PC-3 (cell line): ENCODE measurements at regions of chr6 and their contacts with region 1.

Region 1: GRCh38 chr6:9405369-9405768 is 970.0 kb upstream of the SLC35B3 start:
- DNase-seq: peak; percentile 95
- ATAC-seq: peak; percentile 83
- H3K4me3 ChIP-seq: peak overlapping the region; percentile 38
- H3K27ac ChIP-seq: peak overlapping the region; percentile 97
- H3K4me1 ChIP-seq: peaks cover 68% of the 10 kb centered on the region
- H3K27me3 ChIP-seq: no peaks in the 10 kb centered on the region
- CTCF ChIP-seq: no peak

Region 2: DNA sequence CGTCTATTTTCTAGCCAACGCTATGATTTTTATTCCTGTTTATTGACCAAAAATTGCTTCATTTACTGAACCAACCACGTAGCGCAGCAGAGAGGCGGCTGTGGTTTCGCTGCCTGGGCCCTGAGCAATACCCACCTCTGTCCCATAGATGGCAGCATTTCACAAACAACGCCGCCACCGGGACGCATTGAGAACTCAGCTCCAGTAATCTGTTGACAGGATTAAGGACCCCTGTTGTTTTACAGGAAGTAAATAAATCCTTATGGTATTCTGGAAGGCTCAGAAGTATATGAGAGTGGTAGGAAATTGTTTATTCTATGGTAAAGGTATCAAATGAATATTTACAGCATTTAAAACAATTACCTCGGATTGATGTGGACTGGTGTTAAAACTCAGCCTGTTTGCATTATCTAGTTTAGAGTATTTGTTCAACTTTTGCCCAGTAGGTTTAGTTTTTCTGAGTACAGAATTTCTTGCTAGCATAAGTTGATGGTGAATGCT is 422.1 kb before region 1 on chr6:
- CTCF ChIA-PET with region 1: no interaction called
- POLR2A ChIA-PET with region 1: no interaction called
- intact Hi-C with region 1: loop called (anchors 2 kb)
- DNase-seq: peak; percentile 78
- ATAC-seq: peak; percentile 98
- H3K4me3 ChIP-seq: no peak overlapping the region
- H3K27ac ChIP-seq: no peak overlapping the region
- H3K4me1 ChIP-seq: no peaks in the 10 kb centered on the region; the same call in 1 of the 2 replicates
- H3K27me3 ChIP-seq: peaks cover 21% of the 10 kb centered on the region; the same call in 1 of the 2 replicates
- CTCF ChIP-seq: peak; percentile 96

Region 3: GRCh38 chr6:9140172-9140571 is 265.2 kb before region 1 on chr6:
- CTCF ChIA-PET with region 1: no interaction called
- POLR2A ChIA-PET with region 1: no interaction called
- intact Hi-C with region 1: loop called (anchors 10 kb)
- DNase-seq: peak; percentile 82
- ATAC-seq: peak; percentile 72
- H3K4me3 ChIP-seq: peak overlapping the region; percentile 53; the same call in 1 of the 2 replicates
- H3K27ac ChIP-seq: peak overlapping the region; percentile 91
- H3K4me1 ChIP-seq: peaks cover 31% of the 10 kb centered on the region
- H3K27me3 ChIP-seq: no peaks in the 10 kb centered on the region
- CTCF ChIP-seq: no peak

Region 4: GRCh38 chr6:9257211-9257610 is 148.2 kb before region 1 on chr6:
- CTCF ChIA-PET with region 1: no interaction called
- POLR2A ChIA-PET with region 1: no interaction called
- intact Hi-C with region 1: no loop called
- DNase-seq: no peak
- ATAC-seq: no peak
- H3K4me3 ChIP-seq: no peak overlapping the region
- H3K27ac ChIP-seq: no peak overlapping the region
- H3K4me1 ChIP-seq: no peaks in the 10 kb centered on the region
- H3K27me3 ChIP-seq: peaks cover 6% of the 10 kb centered on the region; the same call in 1 of the 2 replicates
- CTCF ChIP-seq: no peak

Region 5: DNA sequence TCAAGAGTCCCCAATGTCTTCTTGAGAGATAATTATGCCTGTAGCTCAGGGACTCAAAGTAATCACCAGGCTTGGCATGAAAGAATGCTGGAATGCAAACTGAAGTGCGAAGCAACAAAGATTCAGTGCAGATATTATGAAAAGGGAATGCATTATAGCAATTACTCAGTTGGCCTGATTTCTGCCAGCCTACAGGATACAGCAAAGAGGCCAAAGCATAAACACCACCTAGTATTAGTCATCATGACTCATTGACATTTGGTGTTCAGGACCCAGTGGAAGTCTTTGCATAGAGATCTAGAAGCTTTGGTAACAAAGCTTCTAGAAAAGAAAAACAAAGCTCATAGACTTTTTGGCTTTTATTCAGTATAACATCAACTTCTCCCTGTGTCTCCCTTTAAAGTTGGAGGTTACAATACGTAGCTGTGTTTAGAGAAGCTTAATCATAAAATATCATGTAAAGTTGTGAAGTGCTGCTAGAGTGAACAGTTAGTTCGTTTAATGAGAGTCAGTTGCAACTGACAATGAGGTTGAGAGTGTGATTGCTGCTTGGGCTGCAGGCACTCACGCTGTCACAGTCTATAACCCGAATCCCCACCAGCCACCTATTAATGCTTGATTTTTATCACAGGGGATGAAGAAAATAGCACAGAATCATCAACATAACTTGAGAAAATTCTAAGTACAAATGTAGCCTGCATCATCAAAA is 76.8 kb after region 1 on chr6:
- CTCF ChIA-PET with region 1: no interaction called
- POLR2A ChIA-PET with region 1: interaction called, 3 read pairs
- intact Hi-C with region 1: loop called (anchors 5 kb)
- DNase-seq: peak; percentile 92
- ATAC-seq: peak; percentile 93
- H3K4me3 ChIP-seq: peak overlapping the region; percentile 27; the same call in 1 of the 2 replicates
- H3K27ac ChIP-seq: peak overlapping the region; percentile 89
- H3K4me1 ChIP-seq: peaks cover 30% of the 10 kb centered on the region
- H3K27me3 ChIP-seq: no peaks in the 10 kb centered on the region
- CTCF ChIP-seq: no peak

Region 6: DNA sequence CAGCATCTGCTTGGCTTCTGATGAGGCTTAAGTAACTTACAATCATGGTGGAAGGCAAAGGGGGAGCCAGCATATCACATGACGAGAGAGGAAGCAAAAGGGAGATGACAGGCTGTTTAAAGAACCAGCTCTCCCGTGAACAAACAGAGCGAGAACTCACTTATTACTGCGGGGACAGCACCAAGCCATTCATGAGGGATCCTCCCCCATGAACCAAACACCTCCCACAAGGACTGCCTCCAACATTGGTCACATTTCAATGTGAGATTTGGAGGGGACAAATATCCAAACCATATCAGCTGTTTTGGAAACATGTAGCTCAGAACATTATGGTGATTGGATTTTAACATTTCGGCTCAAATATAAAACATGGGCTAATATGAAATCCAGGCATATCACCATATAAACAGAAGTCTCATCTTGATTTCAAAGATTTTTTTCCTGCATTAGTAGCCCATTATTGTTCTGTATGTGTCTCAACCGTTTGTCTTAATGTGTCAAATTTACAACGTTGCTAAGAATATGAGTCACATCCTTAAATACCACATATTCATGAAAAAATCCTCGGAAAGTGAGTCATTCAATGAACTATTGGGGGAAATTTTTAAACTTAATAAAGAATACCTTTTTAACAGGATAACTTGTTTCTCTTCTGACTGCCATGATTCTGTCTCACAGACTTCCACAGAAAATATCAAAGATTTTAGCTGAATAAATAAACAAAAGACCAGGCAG is 115.2 kb after region 1 on chr6:
- CTCF ChIA-PET with region 1: no interaction called
- POLR2A ChIA-PET with region 1: no interaction called
- intact Hi-C with region 1: loop called (anchors 5 kb)
- DNase-seq: peak; percentile 84
- ATAC-seq: peak; percentile 70
- H3K4me3 ChIP-seq: no peak overlapping the region
- H3K27ac ChIP-seq: peak overlapping the region; percentile 36
- H3K4me1 ChIP-seq: peaks cover 53% of the 10 kb centered on the region
- H3K27me3 ChIP-seq: no peaks in the 10 kb centered on the region
- CTCF ChIP-seq: no peak

Region 7: DNA sequence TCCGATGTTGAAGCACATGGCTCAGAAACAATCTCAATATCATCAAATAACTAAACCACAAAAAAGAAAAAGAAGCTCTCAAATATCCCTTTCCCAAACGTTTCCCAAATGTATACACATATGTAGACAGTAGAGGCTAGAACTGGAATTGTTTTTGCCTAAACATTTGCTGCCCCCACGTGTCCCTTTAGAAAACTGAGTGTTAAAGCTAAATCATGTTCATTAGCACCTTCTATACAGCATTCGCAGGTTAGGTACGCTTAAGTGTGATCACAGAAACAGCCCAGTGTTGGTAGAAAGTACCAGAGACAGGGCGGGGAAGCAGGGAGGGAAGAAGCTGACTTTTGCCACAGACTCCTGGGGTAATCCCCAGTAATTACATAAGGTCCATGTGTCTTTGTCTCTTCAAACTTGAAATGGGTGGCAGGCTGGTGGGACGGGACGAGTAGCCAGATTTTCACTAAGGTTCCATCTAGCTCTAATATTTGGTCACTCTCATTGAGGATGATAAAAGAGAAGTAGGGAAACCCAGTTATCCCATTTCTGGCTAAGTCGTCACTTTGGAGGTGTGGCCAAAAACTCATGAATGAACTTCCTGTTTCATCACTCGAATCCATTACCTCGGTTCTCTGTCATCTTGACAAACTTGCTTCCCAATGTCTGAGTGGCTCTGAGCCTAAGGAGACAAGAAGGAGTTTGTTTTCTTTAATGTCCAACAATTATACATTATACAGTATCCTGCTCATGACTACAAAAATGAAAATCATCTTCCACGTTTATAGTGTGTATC is 1024.5 kb after region 1 on chr6:
- CTCF ChIA-PET with region 1: interaction called, 5 read pairs
- POLR2A ChIA-PET with region 1: no interaction called
- intact Hi-C with region 1: loop called (anchors 2 kb)
- DNase-seq: peak; percentile 75
- ATAC-seq: peak; percentile 92
- H3K4me3 ChIP-seq: peak overlapping the region; percentile 60
- H3K27ac ChIP-seq: no peak overlapping the region
- H3K4me1 ChIP-seq: peaks cover 20% of the 10 kb centered on the region
- H3K27me3 ChIP-seq: no peaks in the 10 kb centered on the region
- CTCF ChIP-seq: peak; percentile 90